ENCODE measurements at regions of chr4 and their contacts with region 1.

Region 1: DNA sequence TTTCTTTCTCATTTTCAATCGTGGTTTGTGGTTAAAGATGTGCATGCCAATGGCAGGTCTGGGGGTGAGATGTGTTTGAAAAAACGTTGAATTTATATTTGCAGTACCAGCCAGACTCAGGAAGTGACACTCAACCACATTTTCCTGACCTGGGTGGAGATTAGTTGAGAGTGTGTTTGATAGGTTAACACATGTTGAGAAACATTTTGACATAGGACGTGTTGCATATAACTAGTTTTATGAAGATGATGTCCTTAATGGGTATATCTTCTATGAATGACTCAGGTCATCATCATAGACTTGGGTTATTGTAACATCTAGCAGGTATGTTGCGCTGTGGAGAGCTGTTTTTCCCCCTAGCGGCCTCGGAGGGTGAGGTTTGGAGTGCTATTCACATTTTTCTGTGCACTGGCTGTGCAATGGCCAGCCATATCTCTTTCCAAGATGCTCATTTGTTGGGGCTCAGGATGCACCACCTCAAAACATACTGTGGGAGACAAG is 21.7 kb upstream of the CD38 start:
- DNase-seq: peak; percentile 88
- H3K4me3 Mint-ChIP-seq: peak overlapping the region; percentile 78
- H3K27ac Mint-ChIP-seq: peak overlapping the region; percentile 96
- H3K4me1 Mint-ChIP-seq: peaks cover 60% of the 10 kb centered on the region
- H3K27me3 Mint-ChIP-seq: no peaks in the 10 kb centered on the region

Region 2: DNA sequence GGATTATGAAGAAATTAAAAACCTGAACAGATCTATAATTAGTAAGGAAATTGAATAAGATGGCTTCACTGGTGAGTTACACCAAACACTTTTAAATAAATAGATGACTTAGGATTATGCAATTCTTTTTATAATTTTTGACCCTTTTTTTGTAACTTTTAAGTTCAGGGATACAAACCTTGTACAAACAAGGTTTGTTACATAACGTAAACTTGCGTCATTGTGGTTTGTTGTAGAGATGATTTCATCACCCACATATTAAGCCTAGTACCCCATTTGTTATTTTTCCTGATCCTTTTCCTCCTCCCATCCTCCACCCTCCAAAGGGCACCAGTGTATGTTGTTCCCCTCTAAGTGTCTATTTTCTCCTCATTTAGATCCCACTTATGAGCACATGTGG is 678.4 kb before region 1 on chr4:
- CTCF ChIA-PET with region 1: no interaction called
- POLR2A ChIA-PET with region 1: no interaction called
- DNase-seq: no peak
- H3K4me3 Mint-ChIP-seq: no peak overlapping the region
- H3K27ac Mint-ChIP-seq: no peak overlapping the region
- H3K4me1 Mint-ChIP-seq: no peaks in the 10 kb centered on the region
- H3K27me3 Mint-ChIP-seq: peaks cover 25% of the 10 kb centered on the region

Region 3: GRCh38 chr4:15738877-15739276 is 17.5 kb before region 1 on chr4:
- CTCF ChIA-PET with region 1: interaction called, 24 read pairs
- POLR2A ChIA-PET with region 1: no interaction called
- DNase-seq: no peak
- H3K4me3 Mint-ChIP-seq: no peak overlapping the region
- H3K27ac Mint-ChIP-seq: no peak overlapping the region
- H3K4me1 Mint-ChIP-seq: peaks cover 28% of the 10 kb centered on the region
- H3K27me3 Mint-ChIP-seq: no peaks in the 10 kb centered on the region

Region 4: DNA sequence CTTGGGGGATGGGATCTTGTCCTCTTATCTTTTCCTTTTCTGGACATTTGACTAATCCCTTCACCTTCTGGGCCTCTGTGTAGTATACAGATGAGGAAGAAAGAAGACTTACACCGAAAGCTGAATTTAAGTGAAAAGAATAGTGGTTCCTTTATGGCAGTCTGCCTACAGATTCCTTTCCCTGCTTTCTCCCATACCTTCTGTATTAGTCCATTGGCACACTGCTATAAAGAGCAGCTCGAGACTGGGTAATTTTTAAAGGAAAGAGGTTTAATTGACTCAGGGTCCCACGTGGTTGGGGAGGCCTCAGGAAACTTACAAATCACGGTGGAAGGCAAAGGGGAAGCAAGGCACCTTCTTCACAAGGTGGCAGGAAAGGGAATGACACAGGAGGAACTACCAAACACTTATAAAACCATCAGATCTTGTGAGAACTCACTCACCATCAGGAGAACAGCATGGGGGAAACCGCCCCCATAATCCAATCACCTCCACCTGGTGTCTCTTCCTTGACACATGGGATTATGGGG is 12.3 kb before region 1 on chr4:
- CTCF ChIA-PET with region 1: interaction called, 24 read pairs
- POLR2A ChIA-PET with region 1: no interaction called
- DNase-seq: no peak
- H3K4me3 Mint-ChIP-seq: no peak overlapping the region
- H3K27ac Mint-ChIP-seq: no peak overlapping the region
- H3K4me1 Mint-ChIP-seq: peaks cover 14% of the 10 kb centered on the region
- H3K27me3 Mint-ChIP-seq: no peaks in the 10 kb centered on the region

Measured in activated CD4-positive, alpha-beta T cell treated with anti-CD3 and anti-CD28 coated beads, Interleukin-2, amount 10 ng/mL, durations not matched to agents 7 days and 5 days (primary cell).